ENCODE measurements at regions of chr4 and their contacts with region 1.

Region 1: DNA sequence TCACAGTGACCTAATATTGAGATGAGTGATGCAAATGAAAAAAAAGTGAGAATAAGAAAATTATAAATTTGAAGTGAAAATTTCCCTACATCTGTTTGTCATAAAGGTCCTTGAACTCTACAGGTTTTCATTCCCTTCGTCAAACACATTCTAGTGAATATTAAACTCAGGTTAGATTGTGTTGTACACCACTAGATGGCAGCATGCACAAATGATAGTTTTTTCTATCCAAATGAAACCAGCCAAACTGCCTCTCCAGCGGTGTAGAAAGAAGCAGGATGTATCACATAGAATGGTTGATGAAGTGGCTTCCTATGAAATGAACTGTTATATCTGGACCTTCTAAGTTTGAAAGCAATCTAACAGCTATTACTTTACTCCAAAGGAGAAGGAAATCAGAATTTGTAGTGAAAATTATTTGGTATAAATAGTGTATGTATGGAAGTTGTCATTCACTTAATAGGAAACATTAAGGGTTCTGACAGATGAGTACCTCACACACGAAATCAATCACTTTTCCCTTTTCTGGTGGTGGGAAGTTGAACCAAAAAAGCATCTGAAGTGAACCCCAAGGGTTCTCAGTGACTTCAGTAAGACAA is 382.7 kb downstream of the UNC5C start:
- DNase-seq: peak; percentile 12
- H3K4me3 Mint-ChIP-seq: no peak overlapping the region
- H3K27ac Mint-ChIP-seq: no peak overlapping the region
- H3K4me1 Mint-ChIP-seq: no peaks in the 10 kb centered on the region
- H3K27me3 Mint-ChIP-seq: peaks cover 9% of the 10 kb centered on the region

Region 2: GRCh38 chr4:94995684-94996394 is 170.2 kb before region 1 on chr4:
- intact Hi-C with region 1: no loop called
- DNase-seq: no peak
- H3K4me3 Mint-ChIP-seq: no peak overlapping the region
- H3K27ac Mint-ChIP-seq: no peak overlapping the region
- H3K4me1 Mint-ChIP-seq: peaks cover 7% of the 10 kb centered on the region
- H3K27me3 Mint-ChIP-seq: no peaks in the 10 kb centered on the region

Region 3: DNA sequence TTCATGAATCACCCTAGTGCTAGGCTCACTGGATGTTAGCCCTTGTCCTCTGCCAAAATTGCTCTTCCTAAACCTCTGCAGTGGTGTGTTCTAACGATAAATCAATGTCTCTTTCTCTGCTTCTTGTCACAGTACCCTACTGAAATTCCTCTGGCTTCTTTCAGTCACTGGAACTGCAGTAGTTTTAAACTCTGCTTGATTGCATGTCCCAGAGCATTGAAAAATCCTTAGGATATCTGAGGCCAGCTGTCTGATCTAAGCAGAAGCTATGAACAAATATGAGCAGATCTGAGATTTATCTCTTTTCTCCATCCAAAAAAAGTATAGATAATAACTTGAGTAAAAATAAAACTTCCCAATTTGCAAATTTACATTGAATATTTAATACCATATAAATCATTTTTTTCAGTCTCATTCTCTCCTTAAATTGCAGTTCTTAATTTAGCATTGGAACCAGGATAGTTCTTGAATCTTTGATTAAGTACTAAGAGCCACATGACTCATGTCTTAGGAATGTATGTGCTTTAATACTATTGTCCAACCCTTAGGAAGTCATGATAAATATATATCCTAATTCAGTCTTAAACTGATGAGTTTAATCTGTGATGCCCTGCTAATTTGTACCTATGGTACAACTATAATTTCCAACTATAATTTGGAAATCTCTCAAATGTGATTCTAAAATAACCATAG is 843.5 kb after region 1 on chr4:
- intact Hi-C with region 1: no loop called
- DNase-seq: no peak
- H3K4me3 Mint-ChIP-seq: no peak overlapping the region
- H3K27ac Mint-ChIP-seq: no peak overlapping the region
- H3K4me1 Mint-ChIP-seq: no peaks in the 10 kb centered on the region
- H3K27me3 Mint-ChIP-seq: no peaks in the 10 kb centered on the region

Region 4: DNA sequence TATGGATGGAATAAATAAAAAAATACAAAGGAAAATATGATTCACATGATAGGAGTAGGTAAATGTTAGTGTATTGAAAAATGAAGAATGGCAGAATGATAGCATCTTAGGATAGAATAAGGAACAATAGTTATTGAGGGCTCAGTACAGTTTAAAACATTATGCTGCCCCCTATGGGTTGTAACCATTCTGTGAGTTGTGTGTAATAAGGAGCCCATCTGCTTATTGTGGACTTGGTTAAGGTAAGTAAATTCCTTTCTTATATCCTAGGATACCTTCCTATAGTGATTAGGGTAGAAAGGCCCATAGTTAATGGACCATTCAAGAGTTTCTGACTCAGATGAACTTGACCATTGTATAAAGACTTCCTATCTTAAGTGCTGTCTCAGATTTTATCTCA is 869.7 kb after region 1 on chr4:
- intact Hi-C with region 1: loop called (anchors 2 kb)
- DNase-seq: no peak
- H3K4me3 Mint-ChIP-seq: no peak overlapping the region
- H3K27ac Mint-ChIP-seq: no peak overlapping the region
- H3K4me1 Mint-ChIP-seq: no peaks in the 10 kb centered on the region
- H3K27me3 Mint-ChIP-seq: no peaks in the 10 kb centered on the region

Region 5: GRCh38 chr4:96379524-96379923 is 1213.5 kb after region 1 on chr4:
- intact Hi-C with region 1: no loop called
- DNase-seq: no peak
- H3K4me3 Mint-ChIP-seq: no peak overlapping the region
- H3K27ac Mint-ChIP-seq: no peak overlapping the region
- H3K4me1 Mint-ChIP-seq: no peaks in the 10 kb centered on the region
- H3K27me3 Mint-ChIP-seq: no peaks in the 10 kb centered on the region

Measured in activated T-helper 1 cell treated with anti-CD3 and anti-CD28 coated beads, Interleukin-12 subunit alpha, Interleukin-12 subunit beta, Interleukin-2, Interleukin-4 antibody, amounts not matched to agents 30 ng/mL and 10 ng/mL and 1 ng/mL, durations not matched to agents 14 hours and 24 hours and 36 hours (primary cell).